ENCODE measurements at regions of chr9 and their contacts with region 1.

Region 1: GRCh38 chr9:71393005-71393404 is 271.6 kb upstream of the TRPM3 start:
- DNase-seq: no peak
- H3K4me3 Mint-ChIP-seq: no peak overlapping the region
- H3K27ac Mint-ChIP-seq: no peak overlapping the region
- H3K4me1 Mint-ChIP-seq: no peaks in the 10 kb centered on the region
- H3K27me3 Mint-ChIP-seq: peaks cover 3% of the 10 kb centered on the region

Region 2: GRCh38 chr9:71349218-71349617 is 43.8 kb before region 1 on chr9:
- intact Hi-C with region 1: loop called (anchors 5 kb)
- DNase-seq: no peak
- H3K4me3 Mint-ChIP-seq: no peak overlapping the region
- H3K27ac Mint-ChIP-seq: no peak overlapping the region
- H3K4me1 Mint-ChIP-seq: no peaks in the 10 kb centered on the region
- H3K27me3 Mint-ChIP-seq: no peaks in the 10 kb centered on the region

Region 3: GRCh38 chr9:71355884-71356283 is 37.1 kb before region 1 on chr9:
- intact Hi-C with region 1: loop called (anchors 5 kb)
- DNase-seq: no peak
- H3K4me3 Mint-ChIP-seq: no peak overlapping the region
- H3K27ac Mint-ChIP-seq: no peak overlapping the region
- H3K4me1 Mint-ChIP-seq: no peaks in the 10 kb centered on the region
- H3K27me3 Mint-ChIP-seq: peaks cover 2% of the 10 kb centered on the region